CD4-positive, alpha-beta memory T cell (primary cell): ENCODE measurements at regions of chr4 and their contacts with region 1.

Region 1: GRCh38 chr4:158253350-158253980 is 43.2 kb downstream of the TMEM144 start:
- DNase-seq: peak; percentile 15 to 33 (median 25)
- H3K4me3 ChIP-seq: no peak overlapping the region
- H3K4me3 Mint-ChIP-seq: no peak overlapping the region
- H3K27ac ChIP-seq: no peak overlapping the region
- H3K27ac Mint-ChIP-seq: no peak overlapping the region
- H3K4me1 ChIP-seq: no peaks in the 10 kb centered on the region
- H3K4me1 Mint-ChIP-seq: peaks cover 0 to 5% (median 0%) of the 10 kb centered on the region in 4 donors
- H3K27me3 ChIP-seq: no peaks in the 10 kb centered on the region
- H3K27me3 Mint-ChIP-seq: peaks cover 3 to 4% of the 10 kb centered on the region in 2 donors

Region 2: GRCh38 chr4:158410272-158410671 is 156.8 kb after region 1 on chr4:
- CTCF ChIA-PET with region 1: no interaction called
- POLR2A ChIA-PET with region 1: no interaction called
- intact Hi-C with region 1: no loop called
- DNase-seq: no peak
- H3K4me3 ChIP-seq: no peak overlapping the region
- H3K4me3 Mint-ChIP-seq: no peak overlapping the region
- H3K27ac ChIP-seq: no peak overlapping the region
- H3K27ac Mint-ChIP-seq: no peak overlapping the region
- H3K4me1 ChIP-seq: no peaks in the 10 kb centered on the region
- H3K4me1 Mint-ChIP-seq: no peaks in the 10 kb centered on the region
- H3K27me3 ChIP-seq: no peaks in the 10 kb centered on the region
- H3K27me3 Mint-ChIP-seq: peaks cover 0 to 2% of the 10 kb centered on the region in 2 donors

Region 3: DNA sequence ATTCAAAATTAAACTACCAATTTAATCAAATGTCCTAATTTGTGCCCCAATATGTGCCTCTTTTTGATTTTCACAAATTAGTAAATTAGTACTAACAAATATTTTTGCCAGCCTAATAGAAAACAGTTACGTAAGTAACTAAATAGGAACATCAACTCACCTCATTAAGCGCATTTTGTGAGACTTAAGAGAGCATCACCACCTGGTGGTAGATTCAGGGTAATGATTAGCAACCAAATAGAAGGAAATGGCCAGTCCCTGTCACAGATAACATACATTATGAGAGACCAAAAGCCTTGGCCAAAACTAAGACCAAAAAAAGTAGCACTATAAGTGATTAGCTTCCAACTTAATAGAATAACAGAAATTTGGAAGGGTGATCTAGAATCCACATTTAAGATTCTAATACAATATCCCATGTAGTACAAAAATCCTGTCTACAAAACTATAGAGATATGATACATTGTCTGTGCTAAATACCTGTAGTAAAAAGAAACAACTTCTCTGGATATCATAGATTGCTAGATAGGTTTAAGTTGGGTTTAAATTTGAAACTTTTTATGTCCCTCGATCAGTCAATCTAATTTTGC is 371.5 kb after region 1 on chr4:
- CTCF ChIA-PET with region 1: no interaction called
- POLR2A ChIA-PET with region 1: no interaction called
- intact Hi-C with region 1: loop called (anchors 2 kb)
- DNase-seq: peak in 3 of 5 donors; percentile 5 to 6 (median 6)
- H3K4me3 ChIP-seq: no peak overlapping the region
- H3K4me3 Mint-ChIP-seq: no peak overlapping the region
- H3K27ac ChIP-seq: no peak overlapping the region
- H3K27ac Mint-ChIP-seq: no peak overlapping the region
- H3K4me1 ChIP-seq: no peaks in the 10 kb centered on the region
- H3K4me1 Mint-ChIP-seq: peaks cover 0 to 2% (median 0%) of the 10 kb centered on the region in 4 donors
- H3K27me3 ChIP-seq: peaks cover under 1% of the 10 kb centered on the region
- H3K27me3 Mint-ChIP-seq: peaks cover 5 to 7% of the 10 kb centered on the region in 2 donors

Region 4: GRCh38 chr4:159446266-159446976 is 1193.0 kb after region 1 on chr4:
- CTCF ChIA-PET with region 1: no interaction called
- POLR2A ChIA-PET with region 1: no interaction called
- intact Hi-C with region 1: loop called (anchors 2 kb)
- DNase-seq: peak in 4 of 5 donors; percentile 7 to 29 (median 12)
- H3K4me3 ChIP-seq: no peak overlapping the region
- H3K4me3 Mint-ChIP-seq: no peak overlapping the region
- H3K27ac ChIP-seq: no peak overlapping the region
- H3K27ac Mint-ChIP-seq: no peak overlapping the region
- H3K4me1 ChIP-seq: no peaks in the 10 kb centered on the region
- H3K4me1 Mint-ChIP-seq: no peaks in the 10 kb centered on the region
- H3K27me3 ChIP-seq: no peaks in the 10 kb centered on the region
- H3K27me3 Mint-ChIP-seq: peaks cover 7 to 12% of the 10 kb centered on the region in 2 donors